Mammary epithelial cell (primary cell): ENCODE measurements at regions of chr7 and their contacts with region 1.

Region 1: GRCh38 chr7:24757353-24758275 is at the start of gene GSDME:
- DNase-seq: peak; percentile 70
- H3K4me3 ChIP-seq: peak within 1 kb of the TSS; percentile 66 to 73 (median 66)
- H3K27ac ChIP-seq: peak within 1 kb of the TSS; percentile 97
- H3K4me1 ChIP-seq: peaks cover 37% of the 10 kb centered on the region
- H3K27me3 ChIP-seq: no peaks in the 10 kb centered on the region
- CTCF ChIP-seq: peak in 1 of 2 donors; percentile 24
- total RNA-seq, gene GSDME: 76.8 to 95.6 TPM

Region 2: GRCh38 chr7:24492571-24492970 is 265.0 kb before region 1 on chr7:
- CTCF ChIA-PET with region 1: no interaction called
- dilution Hi-C with region 1: no loop called
- in situ Hi-C with region 1: no loop called
- intact Hi-C with region 1: no loop called
- DNase-seq: no peak
- H3K4me3 ChIP-seq: no peak overlapping the region
- H3K27ac ChIP-seq: no peak overlapping the region
- H3K4me1 ChIP-seq: no peaks in the 10 kb centered on the region
- H3K27me3 ChIP-seq: peaks cover 13% of the 10 kb centered on the region
- CTCF ChIP-seq: no peak

Region 3: DNA sequence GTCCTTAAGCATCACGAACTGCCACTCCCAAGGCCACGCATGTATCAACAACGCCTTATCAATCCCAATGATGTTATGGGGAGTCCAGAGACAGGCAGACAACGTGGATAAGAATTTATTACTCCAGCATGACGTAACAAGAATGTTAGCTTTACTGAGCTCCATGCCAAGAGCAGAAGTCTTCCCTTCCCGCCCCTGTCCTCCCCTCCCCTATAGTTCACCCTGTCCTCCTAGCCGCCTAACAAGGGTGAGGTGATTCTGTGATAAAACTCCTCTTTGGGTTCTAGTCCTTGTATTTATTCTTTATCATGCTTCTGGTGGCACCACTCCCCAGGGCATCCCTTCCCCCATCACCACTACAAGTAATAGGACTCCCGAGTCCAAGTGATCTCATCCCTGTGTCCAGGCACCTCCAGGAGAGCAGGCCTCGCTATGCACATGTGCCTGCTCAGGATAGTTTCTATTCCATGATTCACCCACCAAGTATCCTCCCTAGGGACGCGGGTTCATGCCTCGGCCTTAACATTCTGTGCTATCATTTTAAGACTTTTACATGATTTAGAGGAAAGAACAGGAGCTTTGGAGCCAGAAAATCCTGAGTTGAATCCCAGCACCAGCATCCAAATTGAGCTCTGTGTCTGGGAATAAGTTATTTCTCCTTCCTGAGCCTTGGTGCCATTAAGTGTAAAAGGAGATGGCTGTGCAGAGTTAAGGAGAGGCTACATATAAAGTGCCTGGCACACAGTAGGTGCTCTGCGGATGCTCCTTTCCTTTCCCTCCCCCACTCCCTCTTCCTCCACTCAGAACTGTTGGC is 15.7 kb before region 1 on chr7:
- CTCF ChIA-PET with region 1: no interaction called
- dilution Hi-C with region 1: no loop called
- in situ Hi-C with region 1: no loop called
- intact Hi-C with region 1: loop called (anchors 1 kb)
- DNase-seq: peak; percentile 90
- H3K4me3 ChIP-seq: no peak overlapping the region
- H3K27ac ChIP-seq: peak overlapping the region; percentile 89
- H3K4me1 ChIP-seq: peaks cover 20% of the 10 kb centered on the region
- H3K27me3 ChIP-seq: no peaks in the 10 kb centered on the region
- CTCF ChIP-seq: no peak

Region 4: DNA sequence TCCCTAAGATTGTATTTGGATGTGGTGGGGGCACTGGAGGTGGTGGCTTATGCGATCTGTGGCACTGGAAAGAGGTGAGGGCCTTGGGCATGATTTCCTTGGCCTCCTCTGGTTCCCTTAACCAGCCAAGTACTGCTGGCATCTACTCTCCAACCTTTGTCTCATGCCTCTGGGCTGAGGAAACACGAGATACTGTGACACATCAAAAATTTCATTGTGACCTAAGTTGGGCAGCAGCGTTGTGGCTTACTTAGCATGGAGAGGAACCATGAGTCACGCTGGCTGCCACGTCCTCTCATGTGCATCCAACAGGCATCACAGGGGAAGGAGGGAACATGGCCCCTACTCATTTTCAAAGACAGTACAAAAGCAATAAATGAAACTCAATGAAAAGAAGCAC is 29.3 kb after region 1 on chr7:
- CTCF ChIA-PET with region 1: no interaction called
- dilution Hi-C with region 1: no loop called
- in situ Hi-C with region 1: no loop called
- intact Hi-C with region 1: loop called (anchors 2 kb)
- DNase-seq: peak; percentile 97
- H3K4me3 ChIP-seq: no peak overlapping the region
- H3K27ac ChIP-seq: peak overlapping the region; percentile 47
- H3K4me1 ChIP-seq: peaks cover 11% of the 10 kb centered on the region
- H3K27me3 ChIP-seq: no peaks in the 10 kb centered on the region
- CTCF ChIP-seq: no peak